ENCODE measurements at regions of chr14 and their contacts with region 1.

Region 1: DNA sequence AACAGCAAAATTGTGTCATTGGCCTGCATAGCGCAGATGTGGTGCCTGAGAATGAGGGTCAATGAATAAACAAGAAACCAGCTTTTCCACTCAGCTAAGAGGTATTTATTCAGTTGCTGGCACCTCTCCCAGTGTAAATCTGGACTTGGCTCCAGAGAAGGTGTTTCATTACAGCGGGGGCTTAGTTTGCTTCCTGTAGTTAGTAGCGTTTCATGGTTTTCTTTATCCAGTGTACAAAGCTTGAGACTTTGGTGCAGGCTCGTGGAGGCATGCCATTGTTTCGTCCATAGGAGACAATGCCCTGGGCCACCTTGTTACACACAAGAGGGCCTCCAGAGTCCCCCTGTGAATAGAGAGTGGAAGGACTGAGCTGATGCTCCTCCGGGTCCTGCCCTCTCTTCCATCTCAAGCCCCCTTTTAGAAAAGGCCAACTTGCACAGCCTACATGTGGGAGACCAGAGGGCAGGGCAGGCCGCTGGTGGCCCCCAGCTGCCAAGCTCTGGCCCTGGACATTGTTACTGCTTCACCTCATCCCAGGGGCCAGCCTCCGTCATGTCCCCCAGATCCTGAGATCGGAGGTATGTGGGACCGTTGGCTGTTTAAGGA is 3.0 kb downstream of the GZMB start:
- DNase-seq: peak; percentile 54
- H3K4me3 Mint-ChIP-seq: peak overlapping the region; percentile 96
- H3K27ac Mint-ChIP-seq: peak overlapping the region; percentile 95
- H3K4me1 Mint-ChIP-seq: peaks cover 65% of the 10 kb centered on the region
- H3K27me3 Mint-ChIP-seq: no peaks in the 10 kb centered on the region

Region 2: GRCh38 chr14:24481622-24482324 is 149.2 kb before region 1 on chr14:
- intact Hi-C with region 1: loop called (anchors 5 kb)
- DNase-seq: peak; percentile 83
- H3K4me3 Mint-ChIP-seq: peak overlapping the region; percentile 39
- H3K27ac Mint-ChIP-seq: peak overlapping the region; percentile 56
- H3K4me1 Mint-ChIP-seq: peaks cover 19% of the 10 kb centered on the region
- H3K27me3 Mint-ChIP-seq: no peaks in the 10 kb centered on the region

Region 3: GRCh38 chr14:24565766-24566165 is 65.2 kb before region 1 on chr14:
- intact Hi-C with region 1: no loop called
- DNase-seq: no peak
- H3K4me3 Mint-ChIP-seq: no peak overlapping the region
- H3K27ac Mint-ChIP-seq: no peak overlapping the region
- H3K4me1 Mint-ChIP-seq: no peaks in the 10 kb centered on the region
- H3K27me3 Mint-ChIP-seq: no peaks in the 10 kb centered on the region

Region 4: GRCh38 chr14:24595073-24595808 is 35.7 kb before region 1 on chr14:
- intact Hi-C with region 1: loop called (anchors 5 kb)
- DNase-seq: no peak
- H3K4me3 Mint-ChIP-seq: no peak overlapping the region
- H3K27ac Mint-ChIP-seq: peak overlapping the region; percentile 11
- H3K4me1 Mint-ChIP-seq: peaks cover 10% of the 10 kb centered on the region
- H3K27me3 Mint-ChIP-seq: peaks cover 24% of the 10 kb centered on the region

Region 5: DNA sequence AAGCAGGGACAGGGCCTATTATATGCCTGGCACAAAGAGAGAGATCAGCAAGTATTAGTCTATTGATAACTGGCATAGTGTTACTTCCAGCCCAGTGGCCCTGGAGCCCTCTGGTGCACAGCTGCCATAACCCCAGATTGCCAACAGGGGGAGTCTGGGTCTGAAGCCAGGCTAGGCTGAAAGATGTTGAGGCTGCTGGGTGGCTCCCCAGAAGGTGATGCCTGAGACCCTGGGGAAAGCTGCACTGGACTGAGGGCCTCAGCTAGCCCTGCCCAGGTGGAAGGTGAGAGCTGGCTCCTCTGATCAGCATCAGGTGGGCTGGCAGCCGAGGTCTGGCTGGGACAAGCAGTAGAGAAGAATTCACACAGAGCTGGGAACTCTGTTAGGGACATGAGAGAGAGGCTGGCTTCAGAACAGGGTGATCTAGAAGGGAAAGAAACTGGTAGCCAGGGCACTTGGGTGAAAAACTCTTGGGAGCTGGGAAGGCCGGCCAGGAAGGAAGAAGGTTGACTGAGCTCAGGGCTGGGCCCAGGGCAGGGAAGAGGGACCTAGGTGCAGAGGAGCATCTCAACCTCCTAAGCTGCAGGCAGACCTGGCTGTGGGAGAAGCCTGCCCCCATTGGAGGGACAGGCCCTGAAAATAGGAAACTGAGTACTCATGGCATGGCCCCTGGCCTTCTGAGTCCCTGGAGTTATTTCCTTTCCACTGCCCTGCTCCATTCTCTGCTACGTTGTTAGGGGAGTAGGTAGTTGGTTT is 25.4 kb before region 1 on chr14:
- intact Hi-C with region 1: loop called (anchors 1 kb)
- DNase-seq: peak; percentile 93
- H3K4me3 Mint-ChIP-seq: peak overlapping the region; percentile 78
- H3K27ac Mint-ChIP-seq: peak overlapping the region; percentile 91
- H3K4me1 Mint-ChIP-seq: peaks cover 56% of the 10 kb centered on the region
- H3K27me3 Mint-ChIP-seq: no peaks in the 10 kb centered on the region

Region 6: DNA sequence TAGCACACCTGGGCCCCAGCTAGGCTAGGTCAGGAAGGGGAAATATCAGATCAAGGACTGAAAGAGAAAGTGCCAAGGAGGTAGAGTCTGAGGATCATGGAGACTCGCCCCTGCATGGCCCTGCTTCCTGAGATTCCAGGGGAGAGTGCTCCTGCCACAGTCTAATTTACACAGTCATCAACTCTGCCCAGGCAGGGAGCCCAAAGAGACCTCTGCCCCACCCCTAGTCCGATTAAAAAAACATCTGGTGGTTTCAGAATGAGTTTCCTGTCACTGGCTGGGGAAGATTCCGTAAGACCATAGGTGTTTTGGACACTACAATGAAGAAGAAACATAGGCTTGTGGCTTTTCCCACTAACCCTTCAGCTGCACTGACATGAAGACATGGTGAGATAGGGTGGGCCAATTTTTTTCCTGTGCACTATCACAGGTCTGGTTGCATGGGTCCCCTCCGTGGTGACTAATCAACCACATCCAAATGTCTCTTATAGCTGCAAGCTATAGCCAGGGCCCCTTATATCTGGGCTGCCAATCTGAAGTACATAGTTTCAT is 34.5 kb after region 1 on chr14:
- intact Hi-C with region 1: loop called (anchors 1 kb)
- DNase-seq: peak; percentile 83
- H3K4me3 Mint-ChIP-seq: peak overlapping the region; percentile 78
- H3K27ac Mint-ChIP-seq: peak overlapping the region; percentile 89
- H3K4me1 Mint-ChIP-seq: peaks cover 83% of the 10 kb centered on the region
- H3K27me3 Mint-ChIP-seq: no peaks in the 10 kb centered on the region

Region 7: GRCh38 chr14:24673534-24674203 is 42.7 kb after region 1 on chr14:
- intact Hi-C with region 1: loop called (anchors 1 kb)
- DNase-seq: peak; percentile 94
- H3K4me3 Mint-ChIP-seq: peak overlapping the region; percentile 84
- H3K27ac Mint-ChIP-seq: peak overlapping the region; percentile 98
- H3K4me1 Mint-ChIP-seq: peaks cover 73% of the 10 kb centered on the region
- H3K27me3 Mint-ChIP-seq: no peaks in the 10 kb centered on the region

Region 8: GRCh38 chr14:24695265-24696241 is 64.6 kb after region 1 on chr14:
- intact Hi-C with region 1: loop called (anchors 2 kb)
- DNase-seq: peak; percentile 73
- H3K4me3 Mint-ChIP-seq: no peak overlapping the region
- H3K27ac Mint-ChIP-seq: no peak overlapping the region
- H3K4me1 Mint-ChIP-seq: peaks cover 33% of the 10 kb centered on the region
- H3K27me3 Mint-ChIP-seq: no peaks in the 10 kb centered on the region

Measured in activated CD4-positive, alpha-beta T cell treated with anti-CD3 and anti-CD28 coated beads, Interleukin-2, amount 10 ng/mL, durations not matched to agents 24 days and 14 days (primary cell).